Dendritic cell treated with granulocyte-macrophage colony-stimulating factor and Interleukin-4, amounts not matched to agents 40 ng/mL and 50 ng/mL, for 4 days (primary cell): ENCODE measurements at regions of chr1 and their contacts with region 1.

Region 1: GRCh38 chr1:84753516-84754385 is 63.5 kb upstream of the SSX2IP start:
- H3K4me3 Mint-ChIP-seq: no peak overlapping the region
- H3K27ac Mint-ChIP-seq: no peak overlapping the region
- H3K4me1 Mint-ChIP-seq: peaks cover 5% of the 10 kb centered on the region
- H3K27me3 Mint-ChIP-seq: peaks cover 9% of the 10 kb centered on the region

Region 2: DNA sequence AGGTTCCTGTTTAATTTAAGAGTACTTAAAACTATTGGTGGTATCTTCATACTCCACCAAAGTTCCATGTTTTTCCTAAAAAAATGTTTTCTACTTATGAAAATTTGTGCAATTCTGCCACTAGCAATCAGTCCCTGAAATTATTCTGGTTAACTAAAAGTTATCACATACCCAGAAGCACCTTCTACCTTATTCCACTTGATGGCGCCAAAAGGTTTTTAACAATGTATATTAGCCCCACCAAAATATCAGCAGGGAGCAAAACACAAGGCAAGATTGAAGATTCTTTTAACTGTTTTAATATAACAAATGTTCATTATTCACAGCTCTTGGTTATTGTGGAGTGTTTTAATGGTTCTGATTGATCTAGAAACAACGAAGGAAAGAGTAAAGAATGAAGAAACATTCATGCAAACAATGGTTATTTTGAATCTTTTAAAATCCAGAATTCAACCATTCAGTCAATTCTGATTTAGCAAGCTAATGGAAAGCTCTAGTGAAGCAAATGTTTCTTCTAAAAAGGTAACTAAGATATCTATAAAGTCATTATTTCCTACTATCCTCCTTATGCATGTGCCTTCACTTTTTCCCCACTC is 822.0 kb before region 1 on chr1:
- intact Hi-C with region 1: loop called (anchors 10 kb)
- H3K4me3 Mint-ChIP-seq: no peak overlapping the region
- H3K27ac Mint-ChIP-seq: no peak overlapping the region
- H3K4me1 Mint-ChIP-seq: peaks cover 5% of the 10 kb centered on the region
- H3K27me3 Mint-ChIP-seq: no peaks in the 10 kb centered on the region

Region 3: DNA sequence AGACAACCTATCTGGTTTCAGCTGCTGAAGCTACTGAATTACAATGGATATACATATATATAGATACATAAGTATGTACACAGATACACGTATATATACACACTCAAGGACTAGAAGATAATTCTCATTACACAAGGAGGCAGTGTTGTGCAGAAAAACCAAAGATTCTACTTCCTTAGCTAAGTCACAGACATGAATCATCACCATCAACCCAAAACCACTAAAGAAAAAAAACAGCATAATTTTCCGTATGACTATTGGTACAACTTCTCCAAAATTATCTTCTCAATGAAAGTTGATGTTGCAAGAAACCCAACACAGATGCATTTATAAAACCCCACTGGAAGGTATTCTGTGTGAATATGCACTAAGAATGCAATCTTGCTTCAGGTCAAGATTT is 311.5 kb before region 1 on chr1:
- intact Hi-C with region 1: loop called (anchors 2 kb)
- H3K4me3 Mint-ChIP-seq: no peak overlapping the region
- H3K27ac Mint-ChIP-seq: peak overlapping the region; percentile 72
- H3K4me1 Mint-ChIP-seq: peaks cover 15% of the 10 kb centered on the region
- H3K27me3 Mint-ChIP-seq: no peaks in the 10 kb centered on the region

Region 4: GRCh38 chr1:84541679-84542078 is 212.1 kb before region 1 on chr1:
- intact Hi-C with region 1: loop called (anchors 10 kb)
- H3K4me3 Mint-ChIP-seq: no peak overlapping the region
- H3K27ac Mint-ChIP-seq: no peak overlapping the region
- H3K4me1 Mint-ChIP-seq: no peaks in the 10 kb centered on the region
- H3K27me3 Mint-ChIP-seq: no peaks in the 10 kb centered on the region

Region 5: GRCh38 chr1:84573967-84574842 is 179.5 kb before region 1 on chr1 and contains the start of gene CTBS:
- intact Hi-C with region 1: no loop called
- H3K4me3 Mint-ChIP-seq: peak within 1 kb of the TSS; percentile 97
- H3K27ac Mint-ChIP-seq: peak within 1 kb of the TSS; percentile 100
- H3K4me1 Mint-ChIP-seq: peaks cover 50% of the 10 kb centered on the region
- H3K27me3 Mint-ChIP-seq: no peaks in the 10 kb centered on the region

Region 6: GRCh38 chr1:84690397-84691121 is 63.2 kb before region 1 on chr1 and contains the start of gene SSX2IP:
- intact Hi-C with region 1: no loop called
- H3K4me3 Mint-ChIP-seq: peak within 1 kb of the TSS; percentile 96
- H3K27ac Mint-ChIP-seq: peak within 1 kb of the TSS; percentile 92
- H3K4me1 Mint-ChIP-seq: peaks cover 40% of the 10 kb centered on the region
- H3K27me3 Mint-ChIP-seq: no peaks in the 10 kb centered on the region

Region 7: DNA sequence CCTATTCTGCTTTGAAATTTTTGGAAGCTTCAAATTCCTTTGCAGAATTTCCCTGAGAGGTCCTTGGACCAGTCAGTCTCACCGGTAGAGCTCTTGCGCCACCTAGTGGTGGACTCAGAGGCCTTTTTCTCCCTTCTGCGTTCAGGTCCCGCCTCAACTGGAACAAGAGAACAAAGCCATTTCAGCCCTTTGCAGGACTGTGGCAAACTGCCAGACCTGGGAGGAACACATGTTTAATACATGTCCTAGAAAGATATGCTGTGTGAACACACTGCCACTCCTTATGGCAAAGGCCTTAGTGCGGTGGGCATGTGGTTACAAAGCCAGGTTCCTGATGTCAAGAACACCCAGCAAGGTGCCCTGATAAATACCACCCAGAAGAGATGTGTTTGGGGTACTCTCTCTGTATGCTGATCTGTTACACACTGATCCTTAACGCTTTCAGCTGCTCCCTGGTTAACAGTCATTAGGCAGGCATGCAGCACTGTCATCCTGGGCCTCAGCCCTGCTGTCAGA is 18.7 kb after region 1 on chr1:
- intact Hi-C with region 1: loop called (anchors 1 kb)
- H3K4me3 Mint-ChIP-seq: no peak overlapping the region
- H3K27ac Mint-ChIP-seq: no peak overlapping the region
- H3K4me1 Mint-ChIP-seq: no peaks in the 10 kb centered on the region
- H3K27me3 Mint-ChIP-seq: peaks cover 1% of the 10 kb centered on the region